ENCODE measurements at regions of chr16 and their contacts with region 1.

Region 1: GRCh38 chr16:67514382-67514828 is 14.2 kb upstream of the RIPOR1 start:
- DNase-seq: peak; percentile 89
- H3K4me3 Mint-ChIP-seq: no peak overlapping the region
- H3K27ac Mint-ChIP-seq: peak overlapping the region; percentile 83
- H3K4me1 Mint-ChIP-seq: peaks cover 33% of the 10 kb centered on the region
- H3K27me3 Mint-ChIP-seq: peaks cover 1% of the 10 kb centered on the region

Region 2: DNA sequence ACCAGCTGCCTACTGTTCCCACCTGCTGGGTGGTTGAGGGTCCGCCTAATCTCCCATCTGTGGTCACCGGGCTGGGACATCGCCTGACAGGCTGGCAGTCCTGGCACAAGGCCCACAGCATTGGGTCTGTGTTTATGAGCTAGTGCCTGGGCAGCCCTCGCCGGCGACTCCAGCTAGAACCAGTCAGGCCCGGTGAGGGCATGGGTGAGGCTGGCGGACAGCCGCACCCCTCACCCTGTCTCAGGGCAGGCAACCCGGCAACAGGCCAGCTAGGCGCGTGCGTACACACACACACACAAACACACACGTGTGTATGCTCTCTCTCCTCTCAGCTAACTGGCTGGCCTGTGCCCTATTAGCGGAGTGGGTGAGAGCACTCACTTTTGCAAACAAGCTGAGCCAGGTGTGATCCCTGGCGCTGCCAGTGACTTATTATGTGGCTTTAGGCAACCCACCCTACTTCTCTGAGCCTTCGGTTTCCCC is 73.1 kb before region 1 on chr16:
- CTCF ChIA-PET with region 1: no interaction called
- POLR2A ChIA-PET with region 1: no interaction called
- DNase-seq: no peak
- H3K4me3 Mint-ChIP-seq: no peak overlapping the region
- H3K27ac Mint-ChIP-seq: no peak overlapping the region
- H3K4me1 Mint-ChIP-seq: no peaks in the 10 kb centered on the region
- H3K27me3 Mint-ChIP-seq: no peaks in the 10 kb centered on the region

Region 3: DNA sequence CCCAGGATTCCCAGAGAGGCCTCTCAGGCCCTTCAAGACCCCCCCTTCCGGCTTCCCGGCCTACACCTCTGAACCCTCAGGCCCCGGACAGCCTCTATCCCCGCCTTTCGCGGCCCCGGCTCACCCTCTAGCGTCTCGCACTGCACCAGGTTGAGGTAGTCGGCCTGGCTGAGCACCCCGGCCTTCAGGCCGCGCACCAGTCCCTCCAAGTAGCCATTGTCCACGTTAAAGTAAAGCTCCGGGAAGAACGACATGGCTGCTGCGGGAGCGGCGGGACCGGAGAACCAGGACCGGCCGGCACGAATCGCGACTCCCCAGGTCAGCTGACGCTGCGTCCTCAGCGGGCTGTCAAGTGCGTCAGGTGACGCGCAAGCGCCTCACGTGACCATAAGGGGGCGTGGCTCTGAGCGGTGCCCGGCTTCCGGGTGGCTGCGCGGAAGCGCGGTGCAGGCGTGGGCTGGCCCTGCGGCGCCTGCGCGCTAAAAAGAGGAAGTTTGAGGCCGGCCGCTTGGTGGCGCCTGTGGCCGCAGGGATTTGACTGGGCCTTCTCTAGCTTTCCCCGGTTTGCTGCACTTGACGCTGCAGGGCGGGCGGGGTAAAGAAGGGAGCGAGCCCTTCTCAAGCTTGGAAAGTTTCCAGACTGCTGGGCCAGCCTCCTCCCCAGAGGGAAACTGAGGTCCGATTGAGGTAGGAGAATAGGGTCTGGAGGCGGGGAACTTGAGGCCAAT is 33.4 kb before region 1 on chr16 and contains the start of gene ATP6V0D1:
- CTCF ChIA-PET with region 1: interaction called, 195 read pairs
- POLR2A ChIA-PET with region 1: no interaction called
- DNase-seq: peak; percentile 99
- H3K4me3 Mint-ChIP-seq: peak within 1 kb of the TSS; percentile 90
- H3K27ac Mint-ChIP-seq: peak within 1 kb of the TSS; percentile 97
- H3K4me1 Mint-ChIP-seq: peaks cover 26% of the 10 kb centered on the region
- H3K27me3 Mint-ChIP-seq: no peaks in the 10 kb centered on the region
- total RNA-seq, gene ATP6V0D1: 52.1 to 60.3 TPM

Region 4: GRCh38 chr16:67490335-67491096 is 23.9 kb before region 1 on chr16:
- CTCF ChIA-PET with region 1: interaction called, 195 read pairs
- POLR2A ChIA-PET with region 1: no interaction called
- DNase-seq: no peak
- H3K4me3 Mint-ChIP-seq: no peak overlapping the region
- H3K27ac Mint-ChIP-seq: no peak overlapping the region
- H3K4me1 Mint-ChIP-seq: peaks cover 19% of the 10 kb centered on the region
- H3K27me3 Mint-ChIP-seq: no peaks in the 10 kb centered on the region

Region 5: GRCh38 chr16:67499106-67499505 is 15.3 kb before region 1 on chr16:
- CTCF ChIA-PET with region 1: interaction called, 195 read pairs
- POLR2A ChIA-PET with region 1: no interaction called
- DNase-seq: no peak
- H3K4me3 Mint-ChIP-seq: no peak overlapping the region
- H3K27ac Mint-ChIP-seq: no peak overlapping the region
- H3K4me1 Mint-ChIP-seq: peaks cover 22% of the 10 kb centered on the region
- H3K27me3 Mint-ChIP-seq: no peaks in the 10 kb centered on the region

Region 6: GRCh38 chr16:67504041-67505021 is 10.1 kb before region 1 on chr16:
- CTCF ChIA-PET with region 1: interaction called, 195 read pairs
- POLR2A ChIA-PET with region 1: no interaction called
- DNase-seq: peak; percentile 79
- H3K4me3 Mint-ChIP-seq: peak overlapping the region; percentile 43
- H3K27ac Mint-ChIP-seq: peak overlapping the region; percentile 97
- H3K4me1 Mint-ChIP-seq: peaks cover 52% of the 10 kb centered on the region
- H3K27me3 Mint-ChIP-seq: no peaks in the 10 kb centered on the region

Measured in activated CD4-positive, alpha-beta T cell treated with anti-CD3 and anti-CD28 coated beads, Interleukin-2, amount 10 ng/mL, durations not matched to agents 7 days and 5 days (primary cell).